ENCODE measurements at regions of chr14 and their contacts with region 1.

Region 1: DNA sequence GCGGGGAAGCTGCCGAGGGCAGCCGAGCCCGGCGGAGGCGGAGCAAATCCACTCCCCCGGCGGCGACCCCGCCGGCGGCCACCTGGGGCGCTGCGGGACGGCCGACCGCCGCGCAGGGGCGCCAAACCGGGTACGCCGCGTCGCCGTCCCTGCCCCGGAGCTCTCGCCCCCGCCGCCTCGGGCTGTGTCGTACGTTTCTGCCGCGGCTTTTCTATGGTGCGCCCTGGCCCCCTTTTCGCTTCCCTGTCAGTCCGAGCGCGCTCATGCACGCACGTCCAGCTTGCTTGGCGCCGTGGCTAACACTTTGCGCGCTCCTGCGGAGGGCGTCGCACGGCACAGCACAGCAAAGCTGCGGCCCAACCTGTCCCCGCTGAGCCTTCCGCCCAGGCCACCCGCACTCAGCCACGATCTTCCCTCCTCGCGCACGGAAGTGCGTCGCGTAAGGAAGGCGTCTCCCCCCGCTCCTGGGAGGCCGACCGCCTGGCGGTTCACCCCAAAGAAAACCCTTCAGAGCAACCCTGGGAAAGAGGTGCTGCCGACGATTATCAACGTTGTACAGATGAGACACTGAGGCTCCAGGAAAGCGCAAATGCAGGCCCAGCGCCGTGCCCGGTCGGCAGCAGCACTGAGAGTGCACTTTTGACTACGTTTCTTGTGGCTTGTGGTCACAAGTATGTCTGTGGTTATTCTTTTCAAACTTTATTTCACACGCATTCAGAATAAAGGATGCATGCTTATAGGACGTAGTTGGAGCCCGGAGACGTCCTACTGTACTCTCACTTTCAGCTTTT is at the start of gene HECTD1:
- DNase-seq: peak; percentile 94
- ATAC-seq: peak; percentile 96
- total RNA-seq, gene HECTD1: 151 TPM

Region 2: GRCh38 chr14:31263485-31264133 is 55.7 kb after region 1 on chr14:
- intact Hi-C with region 1: loop called (anchors 1 kb)
- DNase-seq: no peak
- ATAC-seq: peak; percentile 88

Region 3: GRCh38 chr14:31320216-31320615 is 112.3 kb after region 1 on chr14:
- intact Hi-C with region 1: loop called (anchors 2 kb)
- DNase-seq: peak; percentile 72
- ATAC-seq: peak; percentile 94